Panc1 (cell line): ENCODE measurements at regions of chr16 and their contacts with region 1.

Region 1: DNA sequence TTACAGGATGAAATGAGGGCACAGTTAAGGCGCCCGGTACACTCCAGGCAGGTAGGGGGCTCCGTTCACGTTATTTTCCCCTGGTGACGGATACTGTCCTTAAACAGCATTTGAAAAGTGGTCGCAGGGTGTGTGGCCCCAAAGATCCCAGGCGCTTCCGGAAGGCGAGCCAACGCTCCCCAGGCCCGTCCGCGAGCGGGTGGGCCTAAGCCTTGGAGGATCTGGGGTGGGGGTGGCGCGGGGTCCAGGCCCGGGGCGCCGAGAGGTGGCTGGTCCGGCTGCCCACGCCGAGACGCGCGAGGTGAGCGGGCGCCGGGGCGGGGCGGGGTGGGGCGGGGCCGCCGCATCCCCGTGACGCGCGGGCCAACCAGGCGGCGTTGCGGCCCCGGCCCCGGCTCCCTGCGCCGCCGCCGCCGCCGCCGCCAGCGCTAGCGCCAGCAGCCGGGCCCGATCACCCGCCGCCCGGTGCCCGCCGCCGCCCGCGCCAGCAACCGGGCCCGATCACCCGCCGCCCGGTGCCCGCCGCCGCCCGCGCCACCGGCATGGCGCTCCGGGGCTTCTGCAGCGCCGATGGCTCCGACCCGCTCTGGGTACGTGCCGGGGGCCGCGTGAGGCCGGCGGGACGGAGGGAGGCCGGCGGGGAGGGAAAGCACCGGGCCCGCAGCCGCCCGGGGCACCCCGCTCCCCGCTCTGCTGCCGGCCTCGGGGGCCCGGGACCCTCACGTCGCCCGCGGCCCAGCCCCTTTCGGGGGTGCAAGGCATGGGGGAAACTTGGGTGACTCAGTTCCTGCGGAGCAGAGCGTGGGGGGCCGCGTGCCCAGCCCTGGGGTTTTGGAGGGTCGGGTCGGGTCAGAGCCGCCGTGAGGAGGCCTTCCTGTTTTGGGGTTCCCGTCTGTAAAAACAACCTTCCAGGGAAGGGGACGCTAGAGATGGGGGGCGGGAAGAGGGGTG is at the start of gene ABCC1:
- DNase-seq: no peak
- ATAC-seq: peak; percentile 84
- H3K4me3 ChIP-seq: peak within 1 kb of the TSS; percentile 76 to 77
- H3K27ac ChIP-seq: peak within 1 kb of the TSS; percentile 98
- H3K4me1 ChIP-seq: peaks cover 68% of the 10 kb centered on the region
- H3K27me3 ChIP-seq: no peaks in the 10 kb centered on the region
- CTCF ChIP-seq: no peak
- total RNA-seq, gene ABCC1: 296 TPM

Region 2: DNA sequence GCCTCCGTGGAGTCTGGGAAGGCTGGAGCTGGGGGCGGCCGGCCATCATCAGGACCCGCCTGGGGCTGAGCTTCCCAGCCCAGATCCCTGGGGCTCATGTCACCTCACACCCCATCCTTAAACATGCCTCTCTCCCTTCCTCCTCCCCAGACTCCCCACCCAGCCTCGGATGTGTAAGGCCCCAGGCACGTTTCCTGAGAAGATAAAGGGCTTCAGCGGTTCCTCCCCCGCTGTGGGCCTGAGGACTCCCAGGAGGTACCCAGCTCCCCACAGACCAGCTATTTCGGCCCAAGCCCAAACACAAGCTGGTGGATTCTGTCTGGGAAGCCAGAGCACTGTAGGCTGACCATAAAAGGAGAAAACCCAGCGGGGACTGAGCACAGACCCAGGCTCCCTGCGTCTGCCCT is 141.9 kb before region 1 on chr16:
- CTCF ChIA-PET with region 1: no interaction called
- POLR2A ChIA-PET with region 1: no interaction called
- in situ Hi-C with region 1: no loop called
- intact Hi-C with region 1: no loop called
- DNase-seq: no peak
- ATAC-seq: no peak
- H3K4me3 ChIP-seq: no peak overlapping the region
- H3K27ac ChIP-seq: no peak overlapping the region
- H3K4me1 ChIP-seq: peaks cover 6% of the 10 kb centered on the region; the same call in 1 of the 2 replicates
- H3K27me3 ChIP-seq: no peaks in the 10 kb centered on the region
- CTCF ChIP-seq: no peak

Region 3: GRCh38 chr16:15996432-15997109 is 47.1 kb after region 1 on chr16:
- CTCF ChIA-PET with region 1: no interaction called
- POLR2A ChIA-PET with region 1: interaction called, 5 read pairs
- in situ Hi-C with region 1: no loop called
- intact Hi-C with region 1: loop called (anchors 5 kb)
- DNase-seq: peak; percentile 99
- ATAC-seq: peak; percentile 87
- H3K4me3 ChIP-seq: peak overlapping the region in 1 of 2 experiments; percentile 21; a peak in 2 of 4 replicates
- H3K27ac ChIP-seq: peak overlapping the region; percentile 99
- H3K4me1 ChIP-seq: peaks cover 89% of the 10 kb centered on the region
- H3K27me3 ChIP-seq: no peaks in the 10 kb centered on the region
- CTCF ChIP-seq: no peak

Region 4: DNA sequence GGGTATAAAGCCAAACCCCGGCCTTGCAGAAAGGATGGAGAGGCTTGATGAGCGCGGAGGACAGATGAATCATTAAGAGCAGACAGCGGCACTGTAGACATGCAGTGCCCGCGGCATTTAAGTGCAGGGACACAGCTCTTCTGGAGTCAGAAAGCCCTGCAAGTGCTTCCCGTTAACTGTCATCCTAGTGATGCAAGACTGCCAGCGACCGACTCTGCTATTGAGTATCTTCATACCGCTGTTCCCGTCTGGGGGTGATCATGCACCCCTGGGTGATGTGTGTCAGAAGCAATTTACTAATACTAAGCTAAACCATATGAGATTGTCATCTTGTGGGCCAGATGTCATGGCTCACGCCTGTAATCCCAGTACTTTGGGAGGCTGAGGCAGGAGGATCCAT is 172.8 kb after region 1 on chr16:
- CTCF ChIA-PET with region 1: interaction called, 7 read pairs
- POLR2A ChIA-PET with region 1: interaction called, 11 read pairs
- in situ Hi-C with region 1: no loop called
- intact Hi-C with region 1: no loop called
- DNase-seq: no peak
- ATAC-seq: no peak
- H3K4me3 ChIP-seq: no peak overlapping the region
- H3K27ac ChIP-seq: no peak overlapping the region
- H3K4me1 ChIP-seq: no peaks in the 10 kb centered on the region
- H3K27me3 ChIP-seq: no peaks in the 10 kb centered on the region
- CTCF ChIP-seq: no peak